Psoas muscle (tissue), 8 donors: ENCODE measurements at regions of chr11 and their contacts with region 1.

Region 1: GRCh38 chr11:93543292-93543977 is at the start of gene SMCO4:
- DNase-seq: peak; percentile 89 to 90
- ATAC-seq: peak; percentile 90 to 97 (median 92)
- H3K4me3 ChIP-seq: peak within 1 kb of the TSS; percentile 84
- H3K27ac ChIP-seq: peak within 1 kb of the TSS; percentile 78
- H3K4me1 ChIP-seq: peaks cover 21% of the 10 kb centered on the region
- H3K27me3 ChIP-seq: no peaks in the 10 kb centered on the region
- CTCF ChIP-seq: peak; percentile 87
- total RNA-seq, gene SMCO4: 8.0 to 21.8 (median 9.5) TPM

Region 2: GRCh38 chr11:92845805-92846204 is 697.6 kb before region 1 on chr11:
- intact Hi-C with region 1: no loop called
- DNase-seq: no peak
- ATAC-seq: no peak
- H3K4me3 ChIP-seq: no peak overlapping the region
- H3K27ac ChIP-seq: no peak overlapping the region
- H3K4me1 ChIP-seq: no peaks in the 10 kb centered on the region
- H3K27me3 ChIP-seq: no peaks in the 10 kb centered on the region
- CTCF ChIP-seq: no peak

Region 3: DNA sequence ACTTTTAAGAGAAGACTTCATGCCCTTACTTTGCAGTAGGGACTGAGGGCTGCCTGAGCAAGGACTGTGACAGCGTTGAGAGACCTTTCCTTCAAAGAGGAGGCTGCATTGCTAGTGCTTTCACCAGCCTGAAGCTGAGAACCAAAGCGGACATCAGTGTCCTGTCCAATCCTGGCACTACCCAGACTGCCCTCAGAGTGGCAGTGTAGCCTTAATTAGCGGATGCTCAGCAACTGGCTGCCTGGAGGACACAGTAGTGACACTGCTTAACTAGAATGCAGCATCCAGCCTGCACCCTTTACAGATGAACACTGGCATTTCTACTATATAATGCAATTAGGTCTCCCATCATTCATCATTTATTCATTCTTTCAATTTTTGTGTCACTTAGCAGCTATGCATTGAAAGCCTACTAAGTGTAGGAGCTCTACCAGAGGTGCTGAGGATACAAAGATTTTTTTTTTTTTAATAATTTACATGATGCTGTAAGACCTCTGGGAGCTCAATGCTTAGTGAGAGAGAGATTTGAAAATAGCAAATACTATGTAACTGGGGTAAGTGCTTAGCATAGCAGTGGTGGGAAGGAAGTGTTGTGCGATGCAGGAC is 308.7 kb before region 1 on chr11:
- intact Hi-C with region 1: loop called (anchors 1 to 5 kb)
- DNase-seq: peak; percentile 66 to 75
- ATAC-seq: peak; percentile 97 to 99 (median 98)
- H3K4me3 ChIP-seq: no peak overlapping the region
- H3K27ac ChIP-seq: no peak overlapping the region
- H3K4me1 ChIP-seq: no peaks in the 10 kb centered on the region
- H3K27me3 ChIP-seq: peaks cover 0 to 3% (median 0%) of the 10 kb centered on the region in 3 donors
- CTCF ChIP-seq: peak; percentile 92

Region 4: DNA sequence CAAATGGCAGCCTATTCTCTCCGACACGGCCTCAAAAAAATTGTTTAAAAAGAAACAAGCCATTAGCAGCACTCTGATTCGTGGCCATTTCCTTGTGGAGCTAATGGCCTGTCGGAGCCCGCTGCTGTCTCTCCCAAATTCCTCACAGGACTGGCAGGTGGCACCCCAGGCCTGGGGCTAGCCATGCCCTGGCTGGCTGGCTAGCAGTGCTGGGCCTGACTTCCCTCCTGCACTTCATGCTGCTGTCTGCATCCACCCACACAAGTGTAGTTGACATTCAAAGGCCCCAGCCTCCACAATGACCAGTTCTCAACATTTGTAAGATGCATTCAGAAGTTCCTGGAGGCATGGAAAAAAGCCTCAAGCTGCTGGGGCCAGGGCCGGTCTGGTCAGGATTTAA is 61.7 kb before region 1 on chr11:
- intact Hi-C with region 1: loop called (anchors 1 to 5 kb)
- DNase-seq: peak in 1 of 2 donors; percentile 18
- ATAC-seq: peak; percentile 71 to 90 (median 82)
- H3K4me3 ChIP-seq: no peak overlapping the region
- H3K27ac ChIP-seq: no peak overlapping the region
- H3K4me1 ChIP-seq: no peaks in the 10 kb centered on the region
- H3K27me3 ChIP-seq: no peaks in the 10 kb centered on the region
- CTCF ChIP-seq: peak; percentile 31

Region 5: GRCh38 chr11:93652161-93652597 is 108.7 kb after region 1 on chr11:
- intact Hi-C with region 1: loop called in 1 of 2 experiments (anchors 2 kb)
- DNase-seq: no peak
- ATAC-seq: no peak
- H3K4me3 ChIP-seq: no peak overlapping the region
- H3K27ac ChIP-seq: no peak overlapping the region
- H3K4me1 ChIP-seq: no peaks in the 10 kb centered on the region
- H3K27me3 ChIP-seq: no peaks in the 10 kb centered on the region
- CTCF ChIP-seq: peak; percentile 76

Region 6: DNA sequence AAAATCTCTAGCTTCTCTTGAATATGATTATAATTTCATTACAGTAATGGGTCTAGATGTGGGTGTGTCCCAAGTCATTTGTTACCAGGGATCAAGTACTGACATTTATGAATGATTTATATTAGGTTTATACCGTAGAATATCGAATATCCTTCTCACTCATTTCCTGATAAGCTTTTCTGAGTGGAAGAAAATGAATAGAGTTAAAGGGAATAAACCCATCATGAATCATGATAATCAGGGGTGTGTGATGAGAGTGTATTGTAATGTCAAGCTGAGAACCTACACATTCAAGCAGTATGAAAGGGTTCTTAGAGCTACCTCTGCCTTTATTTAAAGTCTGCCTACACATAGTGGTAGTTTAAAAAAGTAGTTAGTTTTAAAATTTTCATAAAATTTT is 257.9 kb after region 1 on chr11:
- intact Hi-C with region 1: no loop called
- DNase-seq: no peak
- ATAC-seq: no peak
- H3K4me3 ChIP-seq: no peak overlapping the region
- H3K27ac ChIP-seq: no peak overlapping the region
- H3K4me1 ChIP-seq: no peaks in the 10 kb centered on the region
- H3K27me3 ChIP-seq: no peaks in the 10 kb centered on the region
- CTCF ChIP-seq: no peak